ENCODE measurements at regions of chr1 and their contacts with region 1.

Region 1: GRCh38 chr1:153510984-153511410 is 24.8 kb downstream of the S100A6 start:
- DNase-seq: peak; percentile 80
- H3K4me3 Mint-ChIP-seq: no peak overlapping the region
- H3K27ac Mint-ChIP-seq: no peak overlapping the region
- H3K4me1 Mint-ChIP-seq: peaks cover 40% of the 10 kb centered on the region
- H3K27me3 Mint-ChIP-seq: no peaks in the 10 kb centered on the region

Region 2: DNA sequence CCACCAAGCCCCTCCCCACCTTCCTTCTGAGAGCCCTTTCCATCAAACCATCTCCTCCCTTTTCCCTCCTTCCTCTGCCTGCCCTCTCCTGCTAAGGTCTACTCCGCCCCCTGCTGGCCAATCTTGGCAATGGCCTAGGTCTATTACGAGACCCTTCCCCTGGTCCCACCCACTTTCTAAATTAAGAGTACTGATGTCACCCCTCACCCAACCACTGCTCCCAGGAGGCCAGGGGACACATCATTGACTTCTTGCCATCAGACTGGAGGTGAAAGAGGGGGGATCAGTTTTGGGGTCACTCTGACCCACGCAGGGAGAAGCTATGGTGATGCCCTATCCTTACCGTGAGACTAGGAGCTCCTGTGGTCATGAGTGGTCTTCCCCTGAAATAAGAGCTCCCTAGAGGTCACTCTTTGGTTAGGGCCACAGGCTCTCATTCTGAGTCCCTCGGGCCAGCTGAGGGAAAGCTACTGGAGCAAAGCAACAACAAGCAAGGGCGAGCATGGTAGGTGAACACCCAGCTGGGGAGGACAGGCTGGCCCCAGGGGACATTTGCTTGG is 15.9 kb before region 1 on chr1:
- CTCF ChIA-PET with region 1: interaction called, 12 read pairs
- POLR2A ChIA-PET with region 1: no interaction called
- DNase-seq: peak; percentile 74
- H3K4me3 Mint-ChIP-seq: no peak overlapping the region
- H3K27ac Mint-ChIP-seq: no peak overlapping the region
- H3K4me1 Mint-ChIP-seq: no peaks in the 10 kb centered on the region
- H3K27me3 Mint-ChIP-seq: peaks cover 30% of the 10 kb centered on the region

Region 3: DNA sequence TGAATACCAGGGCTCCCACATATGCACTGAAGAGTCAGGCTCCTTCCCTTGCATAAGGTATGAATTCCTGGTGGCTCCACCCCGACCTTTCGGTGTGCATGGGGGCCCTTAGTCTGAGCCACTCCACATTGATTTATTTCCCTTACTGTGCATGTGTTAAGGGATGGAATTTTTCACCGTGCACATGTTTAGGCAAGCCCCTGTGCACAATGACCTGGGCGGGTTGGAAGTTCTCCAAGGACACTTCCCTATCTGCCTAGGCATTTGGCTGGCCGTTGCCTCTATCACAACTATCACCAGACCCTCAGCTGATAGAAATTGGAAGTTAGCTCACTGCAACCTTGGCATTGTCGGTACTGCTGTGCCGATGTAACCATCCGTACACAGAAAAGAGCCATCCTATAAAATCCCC is 15.1 kb after region 1 on chr1:
- CTCF ChIA-PET with region 1: interaction called, 83 read pairs
- POLR2A ChIA-PET with region 1: interaction called, 25 read pairs
- DNase-seq: no peak
- H3K4me3 Mint-ChIP-seq: no peak overlapping the region
- H3K27ac Mint-ChIP-seq: no peak overlapping the region
- H3K4me1 Mint-ChIP-seq: peaks cover 18% of the 10 kb centered on the region
- H3K27me3 Mint-ChIP-seq: no peaks in the 10 kb centered on the region

Region 4: DNA sequence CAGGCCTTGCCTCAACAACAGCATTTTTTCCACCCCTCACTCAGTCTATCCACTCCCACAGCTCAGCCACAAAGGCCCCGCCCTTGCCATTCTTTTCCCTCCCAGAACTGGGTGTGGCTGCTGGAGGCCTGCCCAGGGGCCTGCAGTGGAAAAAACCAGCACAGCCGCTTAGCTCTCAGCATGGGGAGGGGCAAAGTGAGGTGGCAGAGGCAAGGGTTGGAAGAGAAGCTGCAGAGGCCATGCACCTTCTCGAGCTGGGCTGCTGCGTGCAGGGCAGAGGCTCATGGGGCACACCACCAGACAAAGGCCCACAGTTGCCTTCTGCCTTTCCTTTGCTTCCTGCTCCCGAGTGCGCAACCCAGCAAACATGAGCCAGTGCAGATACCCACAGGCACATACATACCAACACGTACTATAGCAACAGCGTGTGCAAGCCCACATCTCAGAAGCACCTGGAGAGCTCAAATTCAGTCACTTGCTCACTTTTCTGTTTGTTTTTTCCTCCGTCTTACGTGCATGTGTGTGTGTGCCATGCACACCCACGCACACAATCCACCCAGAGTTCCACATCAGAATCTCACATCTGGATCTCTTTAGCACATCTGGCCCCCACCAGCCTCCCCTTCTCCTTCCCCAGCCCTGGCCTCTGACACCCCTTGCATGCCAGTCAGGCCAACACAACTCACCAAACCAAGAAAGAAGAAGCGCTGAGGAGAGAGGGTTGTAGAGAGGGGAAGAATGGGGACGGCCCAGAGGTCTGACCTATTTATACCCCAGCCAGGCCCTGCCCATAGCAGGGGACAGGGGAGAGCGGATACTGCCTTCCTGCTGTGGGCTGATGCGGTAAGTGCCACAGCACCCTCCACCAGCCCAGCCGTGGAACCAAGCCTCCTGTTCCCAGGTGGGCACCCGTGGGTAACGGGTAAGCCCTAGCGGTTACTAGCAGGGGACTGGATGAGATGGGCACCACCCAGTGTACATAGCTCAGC is 34.4 kb after region 1 on chr1 and contains the start of gene S100A4:
- CTCF ChIA-PET with region 1: interaction called, 10 read pairs
- POLR2A ChIA-PET with region 1: interaction called, 5 read pairs
- DNase-seq: peak; percentile 97
- H3K4me3 Mint-ChIP-seq: peak within 1 kb of the TSS; percentile 96
- H3K27ac Mint-ChIP-seq: peak within 1 kb of the TSS; percentile 98
- H3K4me1 Mint-ChIP-seq: peaks cover 90% of the 10 kb centered on the region
- H3K27me3 Mint-ChIP-seq: peaks cover 3% of the 10 kb centered on the region
- total RNA-seq, gene S100A4: 1,297 to 1,322 TPM

Region 5: DNA sequence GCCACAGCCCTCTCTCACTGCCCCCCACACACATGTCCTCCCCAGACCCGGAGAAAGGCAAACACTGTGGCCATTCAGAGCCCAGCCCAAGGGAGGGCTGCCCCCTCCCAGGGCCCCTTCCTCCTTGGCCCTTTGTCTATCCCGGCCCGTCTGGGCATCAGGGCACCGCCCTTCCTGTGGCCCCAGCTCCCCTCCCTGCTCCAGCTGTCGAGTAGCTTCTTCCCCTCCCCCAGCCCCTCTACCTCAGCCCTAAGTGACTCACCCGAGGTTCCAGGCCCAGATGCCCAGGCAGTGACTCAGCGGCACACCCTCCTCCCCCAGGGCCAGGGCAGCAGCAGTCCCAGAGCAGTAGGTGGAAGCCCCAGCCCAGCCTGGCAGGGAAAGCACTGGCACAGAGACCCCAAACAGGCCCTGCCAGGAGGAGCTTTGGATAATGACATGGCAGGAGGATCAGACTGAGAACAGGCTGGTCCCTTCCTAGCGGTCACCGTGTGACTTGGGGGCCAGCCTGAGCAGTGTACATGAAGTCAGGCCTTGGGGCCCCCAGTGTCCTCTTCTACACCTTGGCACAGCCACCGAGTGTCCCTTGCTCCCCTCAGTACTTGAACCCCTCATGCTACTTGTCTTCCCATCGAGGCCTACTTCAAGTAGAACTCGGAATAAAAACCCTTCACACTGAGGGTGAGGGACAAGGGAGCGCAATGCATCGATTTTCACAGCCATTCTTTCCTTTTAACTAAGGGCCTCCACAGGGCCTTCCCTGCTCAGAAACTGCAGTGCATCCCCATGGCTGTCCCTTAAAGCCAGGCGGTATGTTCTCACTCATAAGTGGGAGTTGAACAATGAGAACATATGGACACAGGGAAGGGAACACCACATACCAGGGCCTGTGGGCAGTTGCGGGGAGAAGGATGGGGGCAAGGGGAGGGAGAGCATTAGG is 55.7 kb after region 1 on chr1:
- CTCF ChIA-PET with region 1: interaction called, 148 read pairs
- POLR2A ChIA-PET with region 1: interaction called, 20 read pairs
- DNase-seq: peak; percentile 92
- H3K4me3 Mint-ChIP-seq: peak overlapping the region; percentile 44
- H3K27ac Mint-ChIP-seq: peak overlapping the region; percentile 100
- H3K4me1 Mint-ChIP-seq: peaks cover 47% of the 10 kb centered on the region
- H3K27me3 Mint-ChIP-seq: no peaks in the 10 kb centered on the region

Region 6: DNA sequence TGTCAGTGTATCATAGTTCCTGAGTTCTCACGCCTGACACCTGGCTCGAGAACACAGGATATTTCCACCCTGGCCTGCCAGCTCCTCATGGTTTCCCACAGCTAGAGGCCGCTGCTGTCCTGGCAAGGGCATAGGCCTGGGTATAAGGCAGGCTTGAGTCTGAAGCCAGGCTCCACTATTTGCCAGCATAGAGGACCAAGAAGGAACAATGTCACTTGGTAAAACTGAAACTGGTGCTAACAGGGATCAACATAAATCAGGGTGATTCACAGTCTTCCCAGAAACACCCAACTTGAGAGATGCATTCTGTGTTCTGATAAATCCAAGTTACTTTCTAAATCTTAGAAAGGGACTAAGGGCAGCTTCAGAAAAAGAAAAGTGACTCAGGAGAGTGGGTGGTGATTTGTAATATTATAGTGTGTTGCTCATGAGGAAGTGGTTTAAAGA is 61.6 kb after region 1 on chr1:
- CTCF ChIA-PET with region 1: interaction called, 148 read pairs
- POLR2A ChIA-PET with region 1: interaction called, 20 read pairs
- DNase-seq: peak; percentile 69
- H3K4me3 Mint-ChIP-seq: no peak overlapping the region
- H3K27ac Mint-ChIP-seq: peak overlapping the region; percentile 54
- H3K4me1 Mint-ChIP-seq: peaks cover 49% of the 10 kb centered on the region
- H3K27me3 Mint-ChIP-seq: peaks cover 9% of the 10 kb centered on the region

Region 7: GRCh38 chr1:153617675-153618074 is 106.7 kb after region 1 on chr1:
- CTCF ChIA-PET with region 1: interaction called, 104 read pairs
- POLR2A ChIA-PET with region 1: interaction called, 4 read pairs
- DNase-seq: peak; percentile 75
- H3K4me3 Mint-ChIP-seq: no peak overlapping the region
- H3K27ac Mint-ChIP-seq: no peak overlapping the region
- H3K4me1 Mint-ChIP-seq: peaks cover 4% of the 10 kb centered on the region
- H3K27me3 Mint-ChIP-seq: no peaks in the 10 kb centered on the region